AG04450 (cell line): ENCODE measurements at regions of chr5 and their contacts with region 1.

Region 1: GRCh38 chr5:40736103-40736875 is 19.5 kb downstream of the TTC33 start:
- DNase-seq: no peak
- H3K4me3 ChIP-seq: no peak overlapping the region
- H3K27ac ChIP-seq: no peak overlapping the region
- H3K27me3 ChIP-seq: no peaks in the 10 kb centered on the region
- CTCF ChIP-seq: peak; percentile 80

Region 2: GRCh38 chr5:39578887-39579497 is 1157.3 kb before region 1 on chr5:
- CTCF ChIA-PET with region 1: interaction called, 33 read pairs
- POLR2A ChIA-PET with region 1: no interaction called
- DNase-seq: no peak
- H3K4me3 ChIP-seq: no peak overlapping the region
- H3K27ac ChIP-seq: no peak overlapping the region
- H3K27me3 ChIP-seq: no peaks in the 10 kb centered on the region
- CTCF ChIP-seq: peak; percentile 50

Region 3: GRCh38 chr5:40717281-40717680 is 19.0 kb before region 1 on chr5:
- CTCF ChIA-PET with region 1: interaction called, 14 read pairs
- POLR2A ChIA-PET with region 1: no interaction called
- DNase-seq: peak; percentile 8
- H3K4me3 ChIP-seq: no peak overlapping the region
- H3K27ac ChIP-seq: no peak overlapping the region
- H3K27me3 ChIP-seq: no peaks in the 10 kb centered on the region
- CTCF ChIP-seq: no peak